BJ (cell line): ENCODE measurements at regions of chr1 and their contacts with region 1.

Region 1: GRCh38 chr1:198497346-198498102 is 43.0 kb downstream of the ATP6V1G3 start:
- DNase-seq: no peak
- H3K4me3 ChIP-seq: no peak overlapping the region
- H3K27me3 ChIP-seq: no peaks in the 10 kb centered on the region
- CTCF ChIP-seq: no peak

Region 2: DNA sequence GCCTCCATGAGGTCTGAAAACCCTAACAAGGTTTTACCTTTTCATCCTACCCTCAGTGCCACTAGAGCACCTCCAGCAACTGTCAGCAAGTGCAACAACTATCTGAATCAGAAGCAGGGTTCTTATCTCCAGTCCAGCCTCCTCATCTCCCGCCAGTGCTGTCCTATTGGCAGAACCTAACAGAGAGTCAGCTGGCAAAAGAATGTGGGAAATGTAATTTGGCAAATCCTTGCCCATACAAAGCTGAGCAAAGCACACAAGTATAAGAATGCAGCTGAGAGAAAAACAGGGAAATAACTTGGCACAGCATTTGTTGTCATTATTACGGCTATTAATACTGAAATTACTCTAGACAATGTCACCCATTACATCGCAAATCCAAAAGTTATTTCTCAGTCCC is 81.2 kb before region 1 on chr1:
- CTCF ChIA-PET with region 1: no interaction called
- POLR2A ChIA-PET with region 1: no interaction called
- DNase-seq: peak; percentile 12
- H3K4me3 ChIP-seq: no peak overlapping the region
- H3K27me3 ChIP-seq: no peaks in the 10 kb centered on the region
- CTCF ChIP-seq: no peak

Region 3: DNA sequence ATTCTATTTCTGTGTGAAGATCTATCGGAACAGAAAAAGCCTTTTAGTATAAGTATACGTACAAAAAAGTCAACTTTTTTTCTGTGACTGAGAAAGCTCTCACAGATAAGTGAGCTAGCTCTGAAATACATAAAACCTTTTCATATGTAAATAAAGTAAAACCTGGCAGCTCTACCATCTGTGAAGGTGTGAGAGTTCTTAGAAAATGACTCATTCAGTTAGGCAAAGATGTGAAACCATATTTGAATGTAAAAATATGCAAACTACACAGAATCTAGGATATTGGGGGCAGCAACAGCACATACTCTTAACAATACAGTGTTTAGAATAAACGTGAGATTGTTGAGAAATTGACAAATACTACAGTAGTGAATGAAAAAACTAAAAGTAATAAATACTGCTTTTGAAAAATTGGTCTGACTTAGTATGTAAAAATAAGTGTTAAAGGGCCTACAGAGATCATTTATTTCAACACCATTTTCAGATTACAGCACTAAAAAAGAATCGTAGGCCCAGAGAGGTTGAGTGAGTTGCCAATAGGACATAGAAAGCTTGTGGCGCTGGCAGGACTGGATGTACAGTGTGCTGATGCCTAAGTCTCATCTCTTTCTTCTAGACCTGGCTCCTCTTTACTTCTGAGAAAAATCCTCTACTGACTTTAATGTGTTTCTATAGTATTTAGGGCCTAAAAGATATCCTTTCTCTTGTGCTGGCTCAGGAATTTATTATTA is 23.2 kb after region 1 on chr1:
- CTCF ChIA-PET with region 1: no interaction called
- POLR2A ChIA-PET with region 1: no interaction called
- DNase-seq: no peak
- H3K4me3 ChIP-seq: no peak overlapping the region
- H3K27me3 ChIP-seq: no peaks in the 10 kb centered on the region
- CTCF ChIP-seq: no peak

Region 4: GRCh38 chr1:198598796-198599321 is 101.3 kb after region 1 on chr1:
- CTCF ChIA-PET with region 1: no interaction called
- POLR2A ChIA-PET with region 1: no interaction called
- DNase-seq: no peak
- H3K4me3 ChIP-seq: no peak overlapping the region
- H3K27me3 ChIP-seq: no peaks in the 10 kb centered on the region
- CTCF ChIP-seq: no peak

Region 5: DNA sequence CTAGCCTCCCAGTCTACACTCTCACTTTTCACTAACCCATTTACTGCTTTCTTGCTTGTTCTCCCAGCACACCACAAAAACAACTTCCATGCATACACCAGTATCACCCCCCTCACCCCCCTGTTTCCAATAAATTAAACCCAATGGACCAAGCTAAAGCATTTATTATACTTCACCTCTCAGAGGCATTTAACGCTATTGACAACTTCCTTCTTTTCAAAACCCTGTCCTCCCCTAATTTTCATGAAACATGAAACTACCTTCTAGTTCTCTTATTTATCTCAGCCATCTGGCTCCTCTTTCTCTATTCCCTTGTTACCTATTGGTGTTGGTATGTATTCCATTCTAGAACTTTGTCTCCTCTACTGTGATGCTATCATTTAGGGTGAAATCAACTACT is 173.6 kb after region 1 on chr1:
- CTCF ChIA-PET with region 1: interaction called, 5 read pairs
- POLR2A ChIA-PET with region 1: interaction called, 12 read pairs
- DNase-seq: no peak
- H3K4me3 ChIP-seq: no peak overlapping the region
- H3K27me3 ChIP-seq: no peaks in the 10 kb centered on the region
- CTCF ChIP-seq: no peak